Heart left ventricle (tissue), 16 donors: ENCODE measurements at regions of chr4 and their contacts with region 1.

Region 1: DNA sequence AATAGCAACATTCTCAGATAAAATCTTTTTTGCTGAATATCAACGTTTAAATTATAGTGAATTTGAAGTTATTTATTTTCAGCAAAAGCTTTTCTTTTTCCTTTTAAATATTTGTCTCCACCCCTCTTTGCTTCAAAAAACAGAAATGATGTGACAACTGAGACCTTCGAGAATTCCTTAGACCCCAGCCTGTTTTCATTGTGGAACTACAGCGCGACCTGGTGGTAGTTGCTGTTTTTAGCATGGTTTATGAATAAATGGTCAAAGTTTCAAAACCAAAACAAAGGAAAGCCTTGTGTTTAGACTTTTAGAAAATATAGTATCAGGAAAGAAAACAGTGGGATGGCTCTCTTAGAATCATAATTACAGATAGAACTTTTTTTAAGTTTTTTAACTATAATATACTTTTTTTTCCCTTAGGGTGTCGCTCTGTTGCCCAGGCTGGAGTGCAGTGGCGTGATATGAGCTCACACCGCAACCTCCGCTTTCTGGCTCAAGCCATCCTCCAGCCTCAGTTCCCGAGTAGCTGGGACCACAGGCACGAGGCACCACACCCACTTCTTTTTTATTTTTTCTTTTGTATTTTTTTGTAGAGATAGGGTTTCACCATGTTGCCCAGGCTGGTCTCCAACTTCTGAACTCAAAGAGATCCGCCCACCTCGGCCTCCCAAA is 26.8 kb upstream of the TMEM184C start:
- DNase-seq: peak in 4 of 5 donors; percentile 22 to 51 (median 45)
- ATAC-seq: peak in 2 of 4 donors; percentile 53 to 65
- H3K4me3 ChIP-seq: peak overlapping the region in 2 of 12 donors; percentile 28 to 33
- H3K27ac ChIP-seq: peak overlapping the region in 1 of 12 donors; percentile 16
- H3K4me1 ChIP-seq: peaks cover 0 to 12% (median 0%) of the 10 kb centered on the region in 12 donors
- H3K27me3 ChIP-seq: no peaks in the 10 kb centered on the region
- CTCF ChIP-seq: peak; percentile 54 to 83 (median 71)
- POLR2A ChIP-seq: no peak

Region 2: GRCh38 chr4:146545102-146545501 is 1045.3 kb before region 1 on chr4:
- intact Hi-C with region 1: no loop called
- DNase-seq: no peak
- ATAC-seq: no peak
- H3K4me3 ChIP-seq: no peak overlapping the region
- H3K27ac ChIP-seq: no peak overlapping the region
- H3K4me1 ChIP-seq: no peaks in the 10 kb centered on the region
- H3K27me3 ChIP-seq: no peaks in the 10 kb centered on the region
- CTCF ChIP-seq: no peak
- POLR2A ChIP-seq: no peak

Region 3: GRCh38 chr4:147019061-147019460 is 571.3 kb before region 1 on chr4:
- intact Hi-C with region 1: loop called (anchors 2 to 10 kb)
- DNase-seq: peak; percentile 38 to 70 (median 55)
- ATAC-seq: peak; percentile 71 to 85 (median 80)
- H3K4me3 ChIP-seq: no peak overlapping the region
- H3K27ac ChIP-seq: no peak overlapping the region
- H3K4me1 ChIP-seq: no peaks in the 10 kb centered on the region
- H3K27me3 ChIP-seq: no peaks in the 10 kb centered on the region
- CTCF ChIP-seq: peak; percentile 49 to 79 (median 68)
- POLR2A ChIP-seq: no peak

Region 4: GRCh38 chr4:147111033-147111367 is 479.4 kb before region 1 on chr4:
- intact Hi-C with region 1: loop called (anchors 2 to 5 kb)
- DNase-seq: no peak
- ATAC-seq: no peak
- H3K4me3 ChIP-seq: no peak overlapping the region
- H3K27ac ChIP-seq: no peak overlapping the region
- H3K4me1 ChIP-seq: no peaks in the 10 kb centered on the region
- H3K27me3 ChIP-seq: no peaks in the 10 kb centered on the region
- CTCF ChIP-seq: peak in 8 of 12 donors; percentile 14 to 49 (median 42)
- POLR2A ChIP-seq: no peak

Region 5: GRCh38 chr4:147160908-147161513 is 429.4 kb before region 1 on chr4:
- intact Hi-C with region 1: loop called (anchors 1 to 5 kb)
- DNase-seq: no peak
- ATAC-seq: peak; percentile 15 to 82 (median 71)
- H3K4me3 ChIP-seq: no peak overlapping the region
- H3K27ac ChIP-seq: no peak overlapping the region
- H3K4me1 ChIP-seq: peaks cover 0 to 17% (median 0%) of the 10 kb centered on the region in 12 donors
- H3K27me3 ChIP-seq: peaks cover 0 to 4% (median 0%) of the 10 kb centered on the region in 9 donors
- CTCF ChIP-seq: peak; percentile 59 to 85 (median 74)
- POLR2A ChIP-seq: no peak

Region 6: GRCh38 chr4:147518846-147519767 is 71.3 kb before region 1 on chr4:
- intact Hi-C with region 1: loop called in 2 of 10 experiments (anchors 5 to 10 kb)
- DNase-seq: peak in 3 of 5 donors; percentile 25 to 45 (median 32)
- ATAC-seq: peak in 2 of 4 donors; percentile 50 to 62
- H3K4me3 ChIP-seq: no peak overlapping the region
- H3K27ac ChIP-seq: no peak overlapping the region
- H3K4me1 ChIP-seq: peaks cover 0 to 28% (median 4%) of the 10 kb centered on the region in 12 donors
- H3K27me3 ChIP-seq: no peaks in the 10 kb centered on the region
- CTCF ChIP-seq: peak; percentile 52 to 80 (median 65)
- POLR2A ChIP-seq: no peak

Region 7: GRCh38 chr4:148044912-148045352 is 454.5 kb after region 1 on chr4:
- intact Hi-C with region 1: no loop called
- DNase-seq: no peak
- ATAC-seq: peak; percentile 26 to 54 (median 31)
- H3K4me3 ChIP-seq: peak overlapping the region in 3 of 12 donors; percentile 4 to 23 (median 10)
- H3K27ac ChIP-seq: peak overlapping the region; percentile 71 to 95 (median 86)
- H3K4me1 ChIP-seq: peaks cover 0 to 56% (median 11%) of the 10 kb centered on the region in 12 donors
- H3K27me3 ChIP-seq: no peaks in the 10 kb centered on the region
- CTCF ChIP-seq: peak in 9 of 12 donors; percentile 7 to 43 (median 12)
- POLR2A ChIP-seq: no peak